Right ventricle myocardium superior (tissue), 1 donor: ENCODE measurements at regions of chr15 and their contacts with region 1.

Region 1: GRCh38 chr15:31200735-31201151 is 99.2 kb upstream of the TRPM1 start:
- DNase-seq: peak; percentile 88
- ATAC-seq: peak; percentile 95

Region 2: DNA sequence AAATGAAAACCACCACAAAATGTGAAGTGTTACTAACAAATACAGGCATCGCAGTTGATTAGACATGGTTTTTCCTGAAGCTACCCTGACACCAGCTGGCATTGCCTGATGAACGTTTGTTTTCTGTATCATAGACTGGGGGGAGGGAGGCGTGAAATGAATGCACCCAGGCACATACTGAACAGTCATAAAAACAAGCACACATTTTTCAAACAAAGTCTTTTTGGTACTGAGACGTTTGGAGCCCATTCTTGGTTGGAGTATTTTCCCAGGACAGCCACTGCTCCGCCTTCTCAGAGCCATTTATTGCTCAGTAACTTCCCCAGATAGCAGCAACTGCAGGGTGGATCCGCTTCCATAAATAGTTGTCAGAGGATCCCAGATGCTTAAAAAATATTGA is 178.3 kb after region 1 on chr15:
- intact Hi-C with region 1: no loop called
- DNase-seq: no peak
- ATAC-seq: no peak

Region 3: DNA sequence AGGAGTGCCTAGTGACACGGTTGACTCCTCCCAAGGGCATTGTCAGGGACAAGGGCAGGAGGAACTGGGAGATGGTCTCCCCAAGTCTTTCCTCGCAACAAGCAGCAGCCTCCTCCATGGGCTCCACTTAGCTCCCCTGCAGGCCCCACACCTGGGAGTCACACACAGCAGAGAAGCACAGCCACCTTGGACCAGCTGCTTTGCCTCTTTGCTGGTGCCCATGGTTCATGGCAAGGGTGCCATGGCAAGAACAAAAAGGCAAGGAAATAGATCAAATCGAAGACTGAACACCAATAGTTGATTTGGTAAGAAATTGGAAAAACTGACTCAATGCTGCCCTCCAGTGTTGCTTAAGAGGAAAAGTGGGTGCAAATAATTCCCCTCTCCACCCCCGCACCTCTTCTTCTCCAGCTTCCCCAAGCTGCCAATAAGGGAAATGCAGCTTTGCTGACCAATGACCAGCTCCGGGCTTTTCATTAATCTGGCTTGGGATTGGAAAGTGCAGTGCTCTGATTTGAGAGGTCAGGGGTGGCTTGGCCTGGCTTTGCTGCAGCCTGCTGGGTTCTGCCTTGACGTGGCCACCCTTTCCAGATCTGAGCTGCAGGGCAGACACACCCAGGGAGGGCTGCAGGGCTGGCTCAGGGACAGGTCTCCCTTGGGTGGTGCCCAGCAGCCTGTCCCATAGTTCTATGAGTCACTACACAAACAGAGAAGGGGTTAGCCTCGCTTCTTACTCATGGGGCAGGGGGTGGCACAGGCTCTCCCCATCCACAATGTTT is 287.9 kb after region 1 on chr15:
- intact Hi-C with region 1: loop called (anchors 2 kb)
- DNase-seq: peak; percentile 69
- ATAC-seq: peak; percentile 87